GM18951 (cell line): ENCODE measurements at regions of chr12 and their contacts with region 1.

Region 1: GRCh38 chr12:112906712-112907414 is at the start of gene OAS1:
- POLR2A ChIP-seq: peak; percentile 84

Region 2: GRCh38 chr12:112627851-112628250 is 279.0 kb before region 1 on chr12:
- in situ Hi-C with region 1: no loop called
- POLR2A ChIP-seq: no peak

Region 3: DNA sequence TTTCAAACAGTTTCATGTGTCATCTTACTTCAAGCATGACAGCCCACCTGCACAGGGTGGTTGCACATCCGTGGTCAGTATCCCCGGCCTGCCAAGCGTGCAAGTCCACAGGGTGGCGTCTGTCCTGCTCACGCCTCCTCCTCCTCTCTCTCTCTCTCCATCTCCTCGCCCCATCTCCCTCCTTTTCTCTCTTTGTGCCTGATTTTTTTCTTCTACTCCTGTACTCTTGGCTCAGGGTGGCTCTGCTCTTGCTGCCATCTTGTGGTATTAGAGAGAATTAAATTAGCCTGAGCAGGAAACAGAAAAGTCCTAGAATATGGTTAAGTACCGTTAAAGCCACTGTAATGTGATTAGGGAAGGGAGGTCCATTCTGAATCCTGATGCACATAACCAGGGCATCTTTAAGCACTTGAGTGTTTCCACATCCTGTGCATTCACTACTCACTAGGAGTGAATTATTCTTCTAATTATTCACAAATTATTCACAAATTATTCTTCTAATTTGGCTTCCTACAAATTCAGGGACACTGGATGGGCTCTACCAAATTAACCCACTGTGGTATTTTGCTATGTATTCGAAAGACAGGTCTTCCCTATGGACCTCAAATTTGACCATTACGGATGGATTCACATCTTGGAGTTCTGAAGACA is 124.1 kb after region 1 on chr12:
- in situ Hi-C with region 1: loop called (anchors 10 kb)
- POLR2A ChIP-seq: no peak